ENCODE measurements at regions of chr9 and their contacts with region 1.

Region 1: DNA sequence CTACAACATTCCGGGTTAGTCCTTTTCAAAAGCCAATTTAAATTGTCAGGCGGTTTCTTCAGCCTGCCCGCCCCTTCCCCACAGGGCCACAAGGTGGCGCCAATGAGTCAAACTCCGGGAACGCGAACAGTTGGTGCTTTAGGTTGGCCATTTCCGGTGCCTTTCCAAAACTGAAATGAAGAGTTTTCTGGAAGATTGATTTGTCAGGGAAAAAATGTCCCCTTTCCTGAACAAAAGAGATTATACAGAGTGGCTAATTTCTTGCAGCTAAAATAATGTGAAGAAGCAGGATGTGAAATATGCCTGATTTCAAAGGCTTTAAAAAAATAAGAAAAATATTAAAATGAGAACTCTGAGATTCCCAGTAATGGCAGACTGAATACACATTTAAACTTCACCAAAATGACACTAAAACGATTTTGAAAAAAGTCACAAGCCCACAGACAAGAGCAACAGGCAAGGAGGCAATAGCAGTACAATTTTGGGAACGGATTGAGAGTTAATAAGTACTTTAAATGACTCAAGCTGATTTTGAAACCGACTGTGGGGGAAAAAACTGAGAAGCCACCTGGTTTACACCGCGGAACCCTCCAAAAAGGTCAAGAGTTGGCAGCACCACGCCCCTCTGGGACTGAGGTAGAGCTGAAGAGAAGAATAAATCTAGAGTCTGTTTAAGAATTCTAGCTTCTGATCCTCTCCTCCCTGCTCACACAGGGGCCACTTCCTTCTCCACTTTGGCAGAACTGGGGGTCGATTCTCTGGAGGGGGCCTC is 45.7 kb downstream of the SLC46A2 start:
- DNase-seq: peak; percentile 66
- ATAC-seq: peak; percentile 79
- H3K4me3 ChIP-seq: no peak overlapping the region
- H3K27ac ChIP-seq: no peak overlapping the region
- H3K4me1 ChIP-seq: peaks cover 6% of the 10 kb centered on the region
- H3K27me3 ChIP-seq: no peaks in the 10 kb centered on the region
- CTCF ChIP-seq: peak; percentile 94
- POLR2A ChIP-seq: no peak
- RAD21 ChIP-seq: peak; percentile 86

Region 2: DNA sequence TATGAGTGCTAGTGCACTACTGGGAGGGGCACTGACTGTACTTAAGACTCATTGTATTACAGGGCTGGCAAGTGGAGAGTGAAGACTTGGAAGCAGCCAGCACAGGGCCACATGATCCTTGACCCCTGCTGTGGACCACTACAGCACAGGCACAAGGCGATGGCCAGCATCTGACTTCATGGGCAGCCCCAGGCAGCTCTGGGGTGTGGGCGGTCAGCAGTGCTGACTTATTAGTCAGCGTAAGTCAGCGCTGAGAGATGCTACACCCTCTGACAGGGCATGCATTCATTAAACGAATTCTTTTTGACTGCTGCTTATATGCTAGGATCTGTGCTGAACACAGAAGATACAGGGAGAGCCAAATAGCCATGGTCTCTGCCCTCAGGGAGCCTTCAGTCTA is 36.4 kb after region 1 on chr9:
- CTCF ChIA-PET with region 1: no interaction called
- POLR2A ChIA-PET with region 1: no interaction called
- dilution Hi-C with region 1: no loop called
- in situ Hi-C with region 1: no loop called
- intact Hi-C with region 1: no loop called
- DNase-seq: peak; percentile 81
- ATAC-seq: peak; percentile 82
- H3K4me3 ChIP-seq: no peak overlapping the region
- H3K27ac ChIP-seq: no peak overlapping the region
- H3K4me1 ChIP-seq: peaks cover 5% of the 10 kb centered on the region
- H3K27me3 ChIP-seq: no peaks in the 10 kb centered on the region
- CTCF ChIP-seq: no peak
- POLR2A ChIP-seq: no peak
- RAD21 ChIP-seq: no peak

Region 3: GRCh38 chr9:112898872-112899311 is 53.9 kb after region 1 on chr9:
- CTCF ChIA-PET with region 1: interaction called, 16 read pairs
- POLR2A ChIA-PET with region 1: no interaction called
- dilution Hi-C with region 1: no loop called
- in situ Hi-C with region 1: no loop called
- intact Hi-C with region 1: loop called (anchors 1 kb)
- DNase-seq: no peak
- ATAC-seq: no peak
- H3K4me3 ChIP-seq: no peak overlapping the region
- H3K27ac ChIP-seq: no peak overlapping the region
- H3K4me1 ChIP-seq: no peaks in the 10 kb centered on the region
- H3K27me3 ChIP-seq: peaks cover 10% of the 10 kb centered on the region; the same call in 1 of the 2 replicates
- CTCF ChIP-seq: no peak
- POLR2A ChIP-seq: no peak
- RAD21 ChIP-seq: no peak

Region 4: DNA sequence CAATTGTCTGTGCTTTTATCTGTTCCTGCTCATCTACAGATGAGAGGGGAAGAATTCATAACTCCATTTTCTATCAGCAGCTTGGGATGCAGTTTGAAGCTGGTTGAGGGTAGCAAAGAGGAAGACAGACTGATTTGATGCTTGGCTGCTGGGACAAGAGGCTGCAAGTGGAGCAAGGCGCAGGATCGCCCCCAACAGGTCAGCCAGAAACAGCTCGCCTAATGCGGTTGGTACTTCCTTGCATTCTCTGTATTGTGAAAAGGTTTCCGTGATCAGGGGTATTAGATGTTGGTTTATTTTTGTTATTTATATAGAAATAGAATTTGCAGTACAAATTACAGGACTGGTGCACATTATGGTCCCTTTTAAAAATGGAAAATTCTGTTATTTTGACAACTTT is 126.5 kb after region 1 on chr9:
- CTCF ChIA-PET with region 1: no interaction called
- POLR2A ChIA-PET with region 1: no interaction called
- dilution Hi-C with region 1: no loop called
- in situ Hi-C with region 1: no loop called
- intact Hi-C with region 1: loop called (anchors 10 kb)
- DNase-seq: peak; percentile 1
- ATAC-seq: no peak
- H3K4me3 ChIP-seq: no peak overlapping the region
- H3K27ac ChIP-seq: no peak overlapping the region
- H3K4me1 ChIP-seq: no peaks in the 10 kb centered on the region
- H3K27me3 ChIP-seq: no peaks in the 10 kb centered on the region
- CTCF ChIP-seq: peak; percentile 22; the same call in 1 of the 2 replicates
- POLR2A ChIP-seq: no peak
- RAD21 ChIP-seq: peak; percentile 40; the same call in 1 of the 2 replicates

Measured in IMR-90 (cell line).